HCT116 (cell line): ENCODE measurements at regions of chr17 and their contacts with region 1.

Region 1: GRCh38 chr17:47889734-47890529 is 6.1 kb upstream of the SP2 start:
- DNase-seq: peak; percentile 78
- ATAC-seq: peak; percentile 99
- H3K4me3 ChIP-seq: no peak overlapping the region
- H3K27ac ChIP-seq: no peak overlapping the region
- H3K4me1 ChIP-seq: peaks cover 0 to 32% of the 10 kb centered on the region in 2 experiments; a peak in 2 of 4 replicates
- H3K27me3 ChIP-seq: no peaks in the 10 kb centered on the region
- CTCF ChIP-seq: peak; percentile 97 to 100 (median 98)
- POLR2A ChIP-seq: no peak
- RAD21 ChIP-seq: peak; percentile 100

Region 2: GRCh38 chr17:47720754-47721533 is 169.0 kb before region 1 on chr17:
- CTCF ChIA-PET with region 1: no interaction called
- POLR2A ChIA-PET with region 1: no interaction called
- RAD21 ChIA-PET with region 1: no interaction called
- intact Hi-C with region 1: no loop called
- DNase-seq: peak; percentile 24
- ATAC-seq: peak; percentile 49
- H3K4me3 ChIP-seq: peak overlapping the region; percentile 8 to 23; a peak in 2 of 4 replicates
- H3K27ac ChIP-seq: no peak overlapping the region
- H3K4me1 ChIP-seq: peaks cover 18 to 47% of the 10 kb centered on the region in 2 experiments
- H3K27me3 ChIP-seq: peaks cover 23% of the 10 kb centered on the region; the same call in 1 of the 2 replicates
- CTCF ChIP-seq: peak in 1 of 3 experiments; percentile 24; a peak in 1 of 6 replicates
- POLR2A ChIP-seq: no peak
- RAD21 ChIP-seq: no peak

Region 3: GRCh38 chr17:47831003-47831933 is 58.7 kb before region 1 on chr17 and contains the starts of genes LRRC46 and MRPL10:
- CTCF ChIA-PET with region 1: interaction called, 10 read pairs
- POLR2A ChIA-PET with region 1: interaction called, 5 read pairs
- RAD21 ChIA-PET with region 1: no interaction called
- intact Hi-C with region 1: no loop called
- DNase-seq: peak; percentile 86
- ATAC-seq: peak; percentile 89
- H3K4me3 ChIP-seq: peak within 1 kb of the TSS; percentile 90 to 99
- H3K27ac ChIP-seq: peak within 1 kb of the TSS; percentile 64
- H3K4me1 ChIP-seq: peaks cover 14 to 20% of the 10 kb centered on the region in 2 experiments; a peak in 3 of 4 replicates
- H3K27me3 ChIP-seq: no peaks in the 10 kb centered on the region
- CTCF ChIP-seq: peak in 2 of 3 experiments; percentile 59 to 70; a peak in 5 of 6 replicates
- POLR2A ChIP-seq: peak; percentile 96
- RAD21 ChIP-seq: no peak; the same call in 1 of the 2 replicates
- total RNA-seq, gene LRRC46: 0.76 TPM
- total RNA-seq, gene MRPL10: 112 TPM

Region 4: DNA sequence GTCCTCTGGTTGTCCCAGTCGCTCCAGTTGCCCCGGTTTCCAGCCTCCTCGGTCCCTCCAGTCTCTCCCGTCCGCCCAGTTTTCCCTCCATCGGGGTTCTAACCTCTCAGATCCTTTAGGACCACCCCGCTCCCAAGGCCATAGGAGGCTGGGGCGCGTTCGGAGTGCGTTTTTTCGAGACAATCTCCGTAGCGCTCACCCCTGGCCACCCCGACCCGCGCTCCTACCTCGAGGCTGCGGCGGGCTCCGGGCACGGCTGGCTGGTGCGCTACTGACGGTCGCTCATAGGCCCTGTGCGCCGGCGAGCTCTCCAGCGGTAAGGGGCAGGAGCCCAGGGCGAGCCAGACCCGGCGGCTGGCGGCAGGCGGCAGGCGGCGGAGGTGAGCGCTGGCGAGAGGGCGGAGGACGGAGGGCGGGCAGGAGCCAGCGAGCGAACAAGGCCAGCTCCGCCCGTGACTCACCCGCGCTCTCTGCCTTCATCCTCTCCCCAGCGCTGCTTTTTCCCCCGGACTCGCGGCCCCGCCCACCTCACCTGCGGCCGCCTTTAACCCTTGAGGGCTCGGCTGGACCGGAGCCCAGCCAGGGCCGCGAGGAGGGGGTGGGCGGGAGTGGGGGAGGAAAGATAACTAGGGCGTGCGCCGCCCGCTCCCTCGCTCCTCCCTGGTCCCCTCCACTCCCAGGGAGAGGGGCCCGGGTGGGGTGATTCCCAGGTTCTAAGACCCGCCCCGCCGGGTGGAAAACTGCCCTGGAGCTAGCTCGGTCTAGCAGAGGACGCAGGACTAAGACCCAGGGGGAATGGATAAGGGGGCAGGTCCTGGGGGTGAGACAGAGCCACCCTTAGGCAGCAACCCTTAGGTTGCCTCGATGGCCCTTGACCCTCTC is 39.0 kb before region 1 on chr17 and contains the start of gene SP6:
- CTCF ChIA-PET with region 1: interaction called, 393 read pairs
- POLR2A ChIA-PET with region 1: interaction called, 19 read pairs
- RAD21 ChIA-PET with region 1: interaction called, 5 read pairs
- intact Hi-C with region 1: no loop called
- DNase-seq: peak; percentile 80
- ATAC-seq: peak; percentile 93
- H3K4me3 ChIP-seq: peak within 1 kb of the TSS; percentile 78 to 89
- H3K27ac ChIP-seq: peak within 1 kb of the TSS; percentile 63
- H3K4me1 ChIP-seq: peaks cover 13 to 30% of the 10 kb centered on the region in 2 experiments
- H3K27me3 ChIP-seq: peaks cover 13% of the 10 kb centered on the region; the same call in 1 of the 2 replicates
- CTCF ChIP-seq: peak in 1 of 3 experiments; percentile 39; a peak in 3 of 6 replicates
- POLR2A ChIP-seq: peak; percentile 97
- RAD21 ChIP-seq: no peak
- total RNA-seq, gene SP6: 10.8 TPM

Region 5: GRCh38 chr17:47879028-47879585 is 10.8 kb before region 1 on chr17:
- CTCF ChIA-PET with region 1: interaction called, 12 read pairs
- POLR2A ChIA-PET with region 1: interaction called, 19 read pairs
- RAD21 ChIA-PET with region 1: no interaction called
- intact Hi-C with region 1: no loop called
- DNase-seq: no peak
- ATAC-seq: no peak
- H3K4me3 ChIP-seq: no peak overlapping the region
- H3K27ac ChIP-seq: no peak overlapping the region
- H3K4me1 ChIP-seq: peaks cover 2 to 34% of the 10 kb centered on the region in 2 experiments
- H3K27me3 ChIP-seq: no peaks in the 10 kb centered on the region
- CTCF ChIP-seq: no peak
- POLR2A ChIP-seq: no peak
- RAD21 ChIP-seq: no peak